Heart left ventricle (tissue), 16 donors: ENCODE measurements at regions of chr9 and their contacts with region 1.

Region 1: GRCh38 chr9:14080959-14081542 is 232.9 kb downstream of the NFIB start:
- DNase-seq: no peak
- ATAC-seq: no peak
- H3K4me3 ChIP-seq: no peak overlapping the region
- H3K27ac ChIP-seq: no peak overlapping the region
- H3K4me1 ChIP-seq: peaks cover 0 to 6% (median 0%) of the 10 kb centered on the region in 12 donors
- H3K27me3 ChIP-seq: no peaks in the 10 kb centered on the region
- CTCF ChIP-seq: no peak
- POLR2A ChIP-seq: no peak

Region 2: DNA sequence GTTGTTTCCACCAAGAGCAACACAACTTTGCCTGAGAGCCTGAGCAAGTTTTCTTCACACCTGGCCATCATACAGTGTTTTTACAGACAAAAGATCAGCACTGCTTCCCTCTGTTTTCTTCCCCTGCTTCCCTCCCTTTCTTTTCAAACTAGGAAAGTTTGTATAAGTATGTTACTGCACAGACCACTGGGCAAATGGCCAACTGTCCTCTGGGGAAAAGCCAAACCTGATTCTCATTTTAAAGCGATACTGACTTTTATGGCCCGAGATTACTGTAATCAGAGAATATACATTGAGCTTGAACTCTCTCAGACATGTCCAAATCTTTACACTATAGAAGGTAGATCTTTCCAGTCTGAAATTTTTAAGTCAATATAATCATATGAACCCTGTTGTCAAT is 182.1 kb before region 1 on chr9:
- intact Hi-C with region 1: loop called in 1 of 10 experiments (anchors 10 kb)
- DNase-seq: peak in 4 of 5 donors; percentile 30 to 44 (median 36)
- ATAC-seq: no peak
- H3K4me3 ChIP-seq: no peak overlapping the region
- H3K27ac ChIP-seq: peak overlapping the region in 11 of 12 donors; percentile 42 to 84 (median 66)
- H3K4me1 ChIP-seq: peaks cover 6 to 66% (median 24%) of the 10 kb centered on the region in 12 donors
- H3K27me3 ChIP-seq: no peaks in the 10 kb centered on the region
- CTCF ChIP-seq: no peak
- POLR2A ChIP-seq: no peak

Region 3: DNA sequence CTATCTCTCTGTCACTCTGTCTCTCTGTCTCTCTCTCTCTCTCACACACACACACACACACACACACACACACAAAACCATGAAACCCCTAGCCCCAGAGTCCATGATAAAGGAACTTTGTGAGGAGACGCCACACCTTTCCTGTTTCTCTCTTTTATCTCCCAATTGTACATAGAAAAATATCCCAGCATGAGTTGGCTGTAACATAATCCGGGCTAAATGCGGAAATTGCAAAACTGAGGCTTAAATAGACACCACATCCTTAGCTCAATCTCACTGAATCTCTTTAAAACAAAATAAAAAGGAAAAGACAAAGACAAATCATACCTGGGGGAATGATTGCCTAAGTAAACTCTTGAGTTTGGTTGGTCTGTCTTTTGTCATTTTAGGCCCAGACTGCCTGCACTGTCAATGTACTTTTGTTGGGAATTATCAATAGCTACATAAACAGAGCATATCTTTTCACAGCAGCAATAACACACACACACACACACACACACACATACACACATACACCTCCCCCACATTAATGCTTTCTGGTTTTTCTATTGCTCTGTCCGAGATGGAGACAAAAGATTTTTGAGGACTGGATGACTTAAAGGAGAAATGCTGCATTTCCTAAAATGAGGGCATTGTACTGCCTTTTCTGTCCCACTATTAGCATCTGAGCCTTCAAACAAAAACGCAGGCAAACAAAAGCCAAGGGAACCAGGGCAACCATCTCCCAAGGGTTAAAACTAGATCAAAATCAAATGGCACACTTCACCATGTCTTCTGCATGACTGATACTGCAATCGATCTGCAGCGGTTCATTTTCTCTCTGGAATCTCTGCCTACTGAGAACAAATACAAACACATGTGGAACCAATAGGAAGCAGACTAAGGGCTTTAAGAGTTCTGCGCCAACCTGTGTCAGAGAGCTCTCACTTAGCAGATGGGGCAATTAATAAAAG is 88.6 kb before region 1 on chr9:
- intact Hi-C with region 1: no loop called
- DNase-seq: no peak
- ATAC-seq: no peak
- H3K4me3 ChIP-seq: no peak overlapping the region
- H3K27ac ChIP-seq: no peak overlapping the region
- H3K4me1 ChIP-seq: peaks cover 0 to 14% (median 0%) of the 10 kb centered on the region in 12 donors
- H3K27me3 ChIP-seq: no peaks in the 10 kb centered on the region
- CTCF ChIP-seq: no peak
- POLR2A ChIP-seq: no peak

Region 4: GRCh38 chr9:14056316-14056861 is 24.7 kb before region 1 on chr9:
- intact Hi-C with region 1: loop called in 1 of 10 experiments (anchors 2 kb)
- DNase-seq: no peak
- ATAC-seq: peak in 2 of 4 donors; percentile 24 to 41
- H3K4me3 ChIP-seq: no peak overlapping the region
- H3K27ac ChIP-seq: peak overlapping the region in 1 of 12 donors; percentile 5
- H3K4me1 ChIP-seq: peaks cover 0 to 37% (median 11%) of the 10 kb centered on the region in 12 donors
- H3K27me3 ChIP-seq: no peaks in the 10 kb centered on the region
- CTCF ChIP-seq: no peak
- POLR2A ChIP-seq: no peak

Region 5: DNA sequence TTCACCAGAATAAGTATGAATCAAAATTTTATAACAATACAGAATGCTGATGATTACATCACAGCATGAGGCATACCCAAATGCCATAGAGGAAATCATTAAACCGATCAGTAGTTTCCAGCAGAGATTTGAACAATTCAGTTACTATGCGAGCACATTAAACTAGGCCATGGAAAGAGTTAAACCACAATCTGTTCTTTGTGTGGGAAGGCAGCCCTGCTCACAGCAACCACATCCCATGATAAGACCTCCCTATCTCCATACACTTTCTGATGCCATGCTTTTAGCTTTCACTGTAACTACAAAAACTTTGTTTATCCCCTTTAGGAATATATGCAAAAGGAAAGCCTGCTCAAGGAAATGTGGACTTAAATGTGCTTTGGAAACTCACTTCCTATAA is 228.4 kb after region 1 on chr9:
- intact Hi-C with region 1: no loop called
- DNase-seq: no peak
- ATAC-seq: peak; percentile 11 to 38 (median 25)
- H3K4me3 ChIP-seq: peak overlapping the region; percentile 5 to 90 (median 80)
- H3K27ac ChIP-seq: peak overlapping the region; percentile 51 to 100 (median 80)
- H3K4me1 ChIP-seq: peaks cover 0 to 59% (median 44%) of the 10 kb centered on the region in 12 donors
- H3K27me3 ChIP-seq: peaks cover 0 to 29% (median 0%) of the 10 kb centered on the region in 9 donors
- CTCF ChIP-seq: no peak
- POLR2A ChIP-seq: no peak